SK-N-SH (cell line): ENCODE measurements at regions of chr7 and their contacts with region 1.

Region 1: DNA sequence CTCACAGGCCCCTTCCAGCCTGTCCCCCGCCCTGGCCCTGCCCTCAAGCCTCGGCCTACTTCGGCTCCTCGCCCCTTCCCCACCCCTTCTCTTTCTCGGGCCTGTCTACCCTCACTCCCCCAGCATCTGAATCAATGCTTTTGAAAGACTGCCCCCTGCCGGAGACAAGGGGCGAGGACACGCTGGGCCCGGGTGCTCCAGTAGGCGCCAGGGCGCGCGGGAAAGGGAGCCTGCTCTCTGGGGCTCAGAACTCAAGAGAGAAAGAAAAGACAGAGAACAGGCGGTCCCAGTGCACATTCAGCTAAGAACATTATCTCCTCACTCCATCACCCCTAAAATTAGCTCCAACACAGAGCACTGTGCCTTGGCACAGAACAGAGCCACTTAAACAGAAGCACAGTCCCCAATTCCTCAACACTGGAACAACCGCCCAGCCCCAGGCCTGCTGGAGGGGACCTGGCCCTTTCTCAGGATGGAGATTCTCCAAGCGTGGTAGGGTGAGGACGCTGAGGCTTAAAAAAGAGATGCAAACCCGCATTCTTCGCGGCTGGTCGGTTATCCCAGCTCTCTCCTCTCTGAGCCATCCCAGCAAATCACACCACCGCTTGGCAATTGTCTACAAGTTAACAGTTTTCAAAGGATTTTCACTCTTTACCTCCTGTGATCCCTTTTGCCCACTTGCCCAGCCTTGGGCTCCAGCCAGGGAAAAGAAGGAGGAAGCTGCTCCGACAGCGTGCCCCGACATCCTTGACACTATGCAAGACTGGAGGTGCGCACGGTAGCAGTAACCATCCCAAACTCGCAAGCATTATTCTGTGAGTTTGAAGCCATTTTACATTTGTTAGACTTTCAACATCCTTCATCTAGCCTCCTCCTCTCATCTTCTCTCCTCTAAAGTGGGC is 2.1 kb downstream of the GIGYF1 start:
- DNase-seq: peak; percentile 98
- H3K4me3 ChIP-seq: peak overlapping the region; percentile 66 to 87
- H3K27ac ChIP-seq: peak overlapping the region in 1 of 2 experiments; percentile 43; a peak in 2 of 4 replicates
- H3K4me1 ChIP-seq: peaks cover 18 to 23% of the 10 kb centered on the region in 2 experiments
- H3K27me3 ChIP-seq: no peaks in the 10 kb centered on the region
- CTCF ChIP-seq: peak; percentile 98
- EP300 ChIP-seq: no peak
- RAD21 ChIP-seq: peak; percentile 89

Region 2: DNA sequence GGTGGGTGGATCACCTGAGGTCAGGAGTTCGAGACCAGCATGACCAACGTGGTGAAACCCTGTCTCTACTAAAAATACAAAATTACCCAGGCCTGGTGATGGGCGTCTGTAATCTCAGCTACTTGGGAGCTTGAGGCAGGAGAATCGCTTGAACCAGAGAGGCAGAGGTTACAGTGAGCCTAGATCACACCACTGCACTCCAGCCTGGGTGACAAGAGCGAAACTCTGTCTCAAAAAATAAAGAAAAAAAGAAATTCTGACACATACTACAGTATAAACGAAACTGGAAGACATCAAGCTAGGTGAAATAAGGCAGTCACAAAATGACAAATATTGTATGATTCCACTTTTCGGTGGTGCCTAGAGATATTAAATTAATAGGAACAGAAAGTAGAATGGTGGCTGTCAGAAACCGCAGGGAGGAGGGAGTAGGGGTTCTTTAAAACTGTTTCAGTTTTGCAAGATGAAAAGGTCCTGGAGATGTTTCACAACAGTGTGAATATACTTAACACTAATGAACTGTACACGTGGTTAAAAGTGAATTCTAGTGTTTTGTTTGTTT is 295.4 kb before region 1 on chr7:
- CTCF ChIA-PET with region 1: no interaction called
- POLR2A ChIA-PET with region 1: no interaction called
- DNase-seq: no peak
- H3K4me3 ChIP-seq: no peak overlapping the region
- H3K27ac ChIP-seq: no peak overlapping the region
- H3K4me1 ChIP-seq: no peaks in the 10 kb centered on the region
- H3K27me3 ChIP-seq: no peaks in the 10 kb centered on the region; the same call in 1 of the 2 replicates
- CTCF ChIP-seq: no peak
- EP300 ChIP-seq: no peak
- RAD21 ChIP-seq: no peak

Region 3: DNA sequence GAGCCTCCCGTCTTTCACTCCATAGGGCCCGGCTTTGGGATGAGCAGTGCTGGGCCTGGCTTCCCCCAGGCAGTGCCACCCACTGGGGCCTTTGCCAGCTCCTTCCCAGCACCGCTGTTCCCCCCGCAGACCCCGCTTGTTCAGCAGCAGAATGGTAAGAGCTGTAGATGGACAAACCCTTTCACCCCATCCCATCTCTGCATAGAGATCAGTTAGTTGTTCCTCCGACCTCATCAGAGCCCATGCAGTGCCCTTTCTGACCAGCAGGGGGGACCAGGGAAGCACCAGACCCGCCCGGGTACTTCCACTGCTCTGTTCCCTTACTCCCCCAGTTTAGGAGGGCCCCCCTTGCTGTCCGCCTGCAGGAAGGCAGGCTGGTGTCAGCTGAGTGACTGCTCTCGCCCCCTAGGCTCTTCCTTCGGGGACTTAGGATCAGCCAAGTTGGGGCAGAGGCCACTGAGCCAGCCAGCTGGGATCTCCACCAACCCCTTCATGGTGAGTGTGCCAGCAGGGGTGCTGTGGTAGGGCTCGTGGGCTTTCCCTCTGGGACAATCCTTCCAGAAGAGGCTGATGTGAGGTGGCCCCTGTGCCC is 128.0 kb before region 1 on chr7:
- CTCF ChIA-PET with region 1: interaction called, 108 read pairs
- POLR2A ChIA-PET with region 1: no interaction called
- DNase-seq: peak; percentile 95
- H3K4me3 ChIP-seq: no peak overlapping the region; a peak in 1 of 4 replicates
- H3K27ac ChIP-seq: no peak overlapping the region; a peak in 1 of 4 replicates
- H3K4me1 ChIP-seq: peaks cover 0 to 24% of the 10 kb centered on the region in 2 experiments; a peak in 1 of 4 replicates
- H3K27me3 ChIP-seq: no peaks in the 10 kb centered on the region
- CTCF ChIP-seq: peak; percentile 98
- EP300 ChIP-seq: no peak
- RAD21 ChIP-seq: peak; percentile 84

Region 4: DNA sequence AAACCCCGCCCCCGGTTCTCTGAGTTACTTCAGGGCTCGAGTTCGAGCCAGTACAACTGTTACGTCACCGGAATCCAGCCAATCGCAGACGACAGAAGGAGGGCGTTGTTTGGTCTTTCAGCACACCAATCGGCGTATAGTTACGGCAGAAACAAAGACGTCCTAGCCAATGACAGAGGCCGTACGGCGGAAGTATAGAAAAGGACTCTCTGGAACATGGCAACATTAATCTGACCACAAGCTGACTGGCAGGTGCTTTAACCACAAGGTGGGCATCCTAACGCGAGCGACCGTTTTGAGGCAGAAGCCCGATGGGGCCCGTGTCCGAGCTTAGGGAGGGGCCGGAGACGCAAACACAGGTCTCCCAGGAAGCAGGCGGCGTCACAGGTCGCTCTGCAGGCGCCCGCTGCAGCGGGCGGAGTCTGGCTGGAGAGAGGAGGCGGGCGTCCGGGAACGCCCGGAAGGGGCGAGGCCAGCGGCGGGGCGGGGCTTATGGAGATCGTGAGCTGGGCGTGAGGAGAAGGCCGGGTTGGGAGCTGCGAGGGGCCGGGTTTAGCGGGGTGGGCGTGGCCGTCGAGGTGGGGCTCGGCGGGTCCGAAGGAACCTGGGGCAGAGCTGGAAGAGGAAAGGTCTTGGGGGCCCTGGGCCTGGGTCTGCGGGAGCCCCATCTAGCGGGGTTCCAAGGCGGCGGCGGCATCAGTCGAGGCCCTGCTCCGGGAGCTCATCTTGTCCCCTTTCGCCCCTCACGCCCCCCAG is 79.8 kb before region 1 on chr7 and contains the start of gene MOSPD3:
- CTCF ChIA-PET with region 1: interaction called, 119 read pairs
- POLR2A ChIA-PET with region 1: interaction called, 4 read pairs
- DNase-seq: peak; percentile 100
- H3K4me3 ChIP-seq: peak within 1 kb of the TSS; percentile 67 to 80
- H3K27ac ChIP-seq: peak within 1 kb of the TSS; percentile 82 to 93
- H3K4me1 ChIP-seq: peaks cover 0 to 8% of the 10 kb centered on the region in 2 experiments; a peak in 1 of 4 replicates
- H3K27me3 ChIP-seq: no peaks in the 10 kb centered on the region
- CTCF ChIP-seq: no peak
- EP300 ChIP-seq: 0 out of 4 replicates have a peak, but pooled peaks of 1 of the 2 experiments have one; percentile 37
- RAD21 ChIP-seq: no peak
- polyA plus RNA-seq, gene MOSPD3: 30.0 and 61.7 TPM in 2 replicates

Region 5: DNA sequence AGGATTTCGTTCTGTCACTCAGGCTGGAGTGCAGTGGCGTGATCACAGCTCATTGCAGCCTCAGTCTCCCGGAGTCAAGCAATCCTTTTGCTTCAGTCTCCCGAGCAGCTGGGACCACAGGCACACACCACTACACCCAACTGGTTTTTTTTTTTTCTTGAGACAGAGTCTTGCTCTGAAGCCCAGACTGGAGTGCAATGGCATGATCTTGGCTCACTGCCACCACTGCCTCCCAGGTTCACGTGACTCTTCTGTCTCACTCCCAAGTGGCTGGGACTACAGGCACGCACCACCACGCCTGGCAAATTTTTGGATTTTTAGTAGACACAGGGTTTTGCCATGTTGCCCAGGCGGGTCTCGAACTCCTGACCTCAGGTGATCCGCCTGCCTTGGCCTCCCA is 29.6 kb before region 1 on chr7:
- CTCF ChIA-PET with region 1: interaction called, 36 read pairs
- POLR2A ChIA-PET with region 1: no interaction called
- DNase-seq: no peak
- H3K4me3 ChIP-seq: no peak overlapping the region
- H3K27ac ChIP-seq: no peak overlapping the region
- H3K4me1 ChIP-seq: no peaks in the 10 kb centered on the region
- H3K27me3 ChIP-seq: 0 out of 2 replicates have a peak, but pooled peaks cover 15% of the 10 kb centered on the region
- CTCF ChIP-seq: no peak
- EP300 ChIP-seq: no peak
- RAD21 ChIP-seq: no peak

Region 6: DNA sequence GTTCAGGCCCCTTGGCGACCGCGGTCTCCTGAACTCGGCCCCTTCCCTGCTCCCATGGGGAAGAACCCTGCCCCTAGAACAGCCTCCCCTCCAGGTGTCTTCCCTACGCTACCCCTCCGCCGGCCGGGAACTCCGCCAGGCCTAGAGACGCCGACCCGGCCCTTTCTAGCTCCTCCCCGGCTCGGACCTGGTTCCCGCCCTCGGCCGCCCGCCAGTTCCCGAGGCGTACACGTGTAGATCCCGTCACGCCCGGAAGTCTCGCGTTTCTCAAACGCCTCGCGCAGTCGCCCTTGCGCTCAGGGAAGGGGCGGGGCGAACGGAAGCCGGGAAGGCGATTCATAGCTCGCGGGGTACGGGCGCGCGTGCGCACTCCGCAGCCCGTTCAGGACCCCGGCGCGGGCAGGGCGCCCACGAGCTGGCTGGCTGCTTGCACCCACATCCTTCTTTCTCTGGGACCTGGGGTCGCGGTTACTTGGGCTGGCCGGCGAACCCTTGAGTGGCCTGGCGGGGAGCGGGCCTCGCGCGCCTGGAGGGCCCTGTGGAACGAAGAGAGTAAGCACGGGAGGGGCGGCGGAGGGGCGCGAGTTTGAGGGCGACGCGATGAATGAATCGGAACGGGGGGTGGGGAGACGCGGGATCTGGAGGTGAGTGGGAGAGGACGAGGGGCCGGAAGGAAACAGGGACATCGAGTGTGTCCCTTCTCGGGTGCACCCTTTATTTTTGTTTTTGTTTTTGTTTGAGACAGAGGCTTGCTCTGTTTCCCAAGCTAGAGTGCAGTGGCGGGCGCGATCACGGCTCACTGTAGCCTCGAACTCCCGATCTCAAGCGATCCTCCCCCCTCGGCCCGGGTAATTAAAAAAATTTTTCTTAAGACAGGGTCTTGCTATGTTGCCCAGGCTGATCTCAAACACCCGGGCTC is 14.1 kb after region 1 on chr7 and contains the start of gene POP7:
- CTCF ChIA-PET with region 1: interaction called, 147 read pairs
- POLR2A ChIA-PET with region 1: interaction called, 8 read pairs
- DNase-seq: peak; percentile 99
- H3K4me3 ChIP-seq: peak within 1 kb of the TSS; percentile 62 to 92
- H3K27ac ChIP-seq: peak within 1 kb of the TSS; percentile 85 to 89
- H3K4me1 ChIP-seq: peaks cover 6 to 14% of the 10 kb centered on the region in 2 experiments; a peak in 2 of 4 replicates
- H3K27me3 ChIP-seq: peaks cover 3% of the 10 kb centered on the region; the same call in 1 of the 2 replicates
- CTCF ChIP-seq: no peak
- EP300 ChIP-seq: no peak
- RAD21 ChIP-seq: no peak
- polyA plus RNA-seq, gene POP7: 63.8 and 81.8 TPM in 2 replicates

Region 7: GRCh38 chr7:100736671-100737070 is 44.7 kb after region 1 on chr7:
- CTCF ChIA-PET with region 1: no interaction called
- POLR2A ChIA-PET with region 1: no interaction called
- DNase-seq: no peak
- H3K4me3 ChIP-seq: no peak overlapping the region
- H3K27ac ChIP-seq: no peak overlapping the region
- H3K4me1 ChIP-seq: no peaks in the 10 kb centered on the region
- H3K27me3 ChIP-seq: peaks cover 15% of the 10 kb centered on the region; the same call in 1 of the 2 replicates
- CTCF ChIP-seq: no peak
- EP300 ChIP-seq: no peak
- RAD21 ChIP-seq: no peak